ENCODE measurements at regions of chr6 and their contacts with region 1.

Region 1: GRCh38 chr6:132669690-132670291 is 10.8 kb upstream of the TAAR1 start:
- DNase-seq: no peak
- H3K4me3 ChIP-seq: no peak overlapping the region
- H3K27ac ChIP-seq: no peak overlapping the region
- H3K27me3 ChIP-seq: no peaks in the 10 kb centered on the region
- CTCF ChIP-seq: peak; percentile 58

Region 2: DNA sequence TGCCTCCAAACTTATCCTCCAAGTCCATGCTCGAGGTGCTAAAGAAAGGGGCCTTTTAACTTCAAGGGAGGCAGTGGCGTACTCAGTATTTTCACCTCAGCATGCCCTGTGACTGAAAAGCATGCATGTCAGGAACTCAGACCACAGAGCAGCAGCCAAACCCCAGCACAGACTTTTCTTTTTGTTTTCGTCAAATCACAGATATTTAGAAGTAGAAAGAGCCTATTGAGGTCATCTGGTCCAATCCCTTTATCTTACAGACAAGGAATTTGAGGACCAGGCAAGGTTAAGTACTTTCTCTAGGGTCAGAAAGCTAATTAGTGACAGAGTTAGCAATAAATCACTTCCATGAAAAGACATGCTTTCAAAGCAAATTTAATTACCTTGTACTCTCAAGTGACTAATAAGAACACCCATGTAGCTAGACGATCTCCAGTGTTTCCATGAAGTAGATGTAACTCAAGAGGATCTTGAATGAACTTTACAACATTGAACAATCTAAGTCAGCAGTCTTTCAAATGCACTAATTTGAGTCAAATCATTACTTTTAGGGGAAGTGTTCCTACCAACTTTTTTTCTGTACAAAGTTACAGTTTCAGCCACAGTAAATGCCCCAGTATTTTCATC is 304.4 kb before region 1 on chr6:
- CTCF ChIA-PET with region 1: no interaction called
- POLR2A ChIA-PET with region 1: no interaction called
- DNase-seq: no peak
- H3K4me3 ChIP-seq: no peak overlapping the region
- H3K27ac ChIP-seq: no peak overlapping the region
- H3K27me3 ChIP-seq: no peaks in the 10 kb centered on the region
- CTCF ChIP-seq: no peak

Region 3: DNA sequence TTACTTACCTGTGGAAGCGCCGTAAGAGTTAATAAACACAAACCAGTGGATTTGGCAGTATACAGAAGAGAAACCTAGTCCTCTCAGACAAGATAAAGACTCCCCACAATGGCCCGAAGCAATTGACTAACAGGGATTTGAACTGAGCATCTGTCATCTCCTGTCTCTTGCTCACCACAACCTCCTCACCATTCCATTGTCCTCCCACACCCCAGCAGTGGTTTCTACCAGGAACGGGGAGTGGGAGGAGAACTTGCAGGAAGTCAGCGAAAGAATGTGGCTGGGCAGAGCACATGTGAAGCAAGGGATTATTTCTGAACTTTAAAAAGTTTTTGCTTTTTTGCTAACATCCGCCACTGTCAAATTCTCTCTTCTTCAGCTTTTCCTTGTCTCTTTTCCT is 13.8 kb after region 1 on chr6:
- CTCF ChIA-PET with region 1: interaction called, 17 read pairs
- POLR2A ChIA-PET with region 1: no interaction called
- DNase-seq: no peak
- H3K4me3 ChIP-seq: no peak overlapping the region
- H3K27ac ChIP-seq: no peak overlapping the region
- H3K27me3 ChIP-seq: no peaks in the 10 kb centered on the region
- CTCF ChIP-seq: no peak

Region 4: GRCh38 chr6:132715204-132715603 is 45.4 kb after region 1 on chr6:
- CTCF ChIA-PET with region 1: interaction called, 38 read pairs
- POLR2A ChIA-PET with region 1: no interaction called
- DNase-seq: peak; percentile 52
- H3K4me3 ChIP-seq: no peak overlapping the region
- H3K27ac ChIP-seq: no peak overlapping the region
- H3K27me3 ChIP-seq: no peaks in the 10 kb centered on the region
- CTCF ChIP-seq: peak; percentile 61

Region 5: DNA sequence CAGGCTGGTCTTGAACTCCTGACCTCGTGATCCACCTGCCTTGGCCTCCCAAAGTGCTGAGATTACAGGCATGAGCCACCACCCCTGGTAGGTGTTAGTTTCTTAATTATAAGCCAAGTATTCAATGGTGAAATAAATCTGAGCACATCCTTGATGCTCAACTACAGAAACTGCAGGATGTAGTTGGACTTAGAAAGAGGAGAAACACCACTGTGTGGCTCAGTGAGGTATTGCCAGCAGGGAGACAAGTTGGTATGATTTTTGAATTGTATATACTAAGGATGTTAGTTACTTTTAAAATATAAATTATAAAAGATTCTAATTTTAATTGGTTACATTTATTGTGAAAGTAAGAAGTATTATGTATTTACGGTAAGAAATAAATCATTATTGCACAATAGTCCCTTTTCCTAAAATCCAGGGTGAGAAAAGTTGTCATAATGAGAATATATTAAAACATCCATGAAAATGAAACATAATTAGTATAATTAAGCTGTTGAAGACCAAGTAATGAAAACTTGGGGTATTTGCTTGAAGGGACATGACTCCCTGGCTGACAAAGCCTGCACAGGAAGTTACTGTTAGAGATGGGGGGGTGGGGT is 111.1 kb after region 1 on chr6:
- CTCF ChIA-PET with region 1: interaction called, 133 read pairs
- POLR2A ChIA-PET with region 1: no interaction called
- DNase-seq: no peak
- H3K4me3 ChIP-seq: no peak overlapping the region
- H3K27ac ChIP-seq: no peak overlapping the region
- H3K27me3 ChIP-seq: no peaks in the 10 kb centered on the region
- CTCF ChIP-seq: peak; percentile 73

Region 6: GRCh38 chr6:132798869-132799538 is 129.2 kb after region 1 on chr6:
- CTCF ChIA-PET with region 1: interaction called, 79 read pairs
- POLR2A ChIA-PET with region 1: no interaction called
- DNase-seq: no peak
- H3K4me3 ChIP-seq: peak overlapping the region; percentile 79
- H3K27ac ChIP-seq: no peak overlapping the region
- H3K27me3 ChIP-seq: peaks cover 2% of the 10 kb centered on the region
- CTCF ChIP-seq: peak; percentile 83

Region 7: DNA sequence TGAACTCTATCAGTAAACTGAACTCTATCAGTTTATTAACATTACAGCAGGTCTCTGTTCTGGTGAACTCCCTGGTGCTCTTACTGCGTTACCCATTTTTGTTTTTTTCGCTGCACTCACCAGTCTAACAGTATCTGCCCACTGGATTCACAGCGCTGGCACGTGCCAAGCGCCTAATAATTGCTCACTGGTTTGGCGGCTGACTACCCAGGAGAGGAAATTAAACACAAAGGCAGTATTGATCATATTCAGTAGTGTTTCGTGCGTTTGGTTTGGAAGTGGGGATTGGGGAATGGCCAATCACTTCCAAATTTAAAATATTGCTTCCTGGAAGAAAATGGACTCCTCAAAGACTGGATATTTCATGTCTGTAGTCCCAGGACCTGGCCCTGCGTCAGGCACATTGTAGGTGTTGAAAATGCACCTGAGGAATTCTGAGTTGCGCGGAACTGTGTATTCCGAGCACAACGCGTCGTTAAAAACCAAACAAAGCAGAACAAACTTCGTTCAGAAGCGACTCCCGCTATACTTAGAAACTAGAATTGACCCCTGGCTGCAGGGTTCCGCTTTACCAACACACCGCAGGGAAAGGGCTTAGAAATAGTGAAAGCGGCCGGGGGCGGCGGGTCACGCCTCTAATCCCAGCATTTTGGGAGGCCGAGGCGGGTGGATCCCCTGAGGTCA is 143.5 kb after region 1 on chr6:
- CTCF ChIA-PET with region 1: interaction called, 19 read pairs
- POLR2A ChIA-PET with region 1: no interaction called
- DNase-seq: no peak
- H3K4me3 ChIP-seq: peak overlapping the region; percentile 87
- H3K27ac ChIP-seq: peak overlapping the region; percentile 65
- H3K27me3 ChIP-seq: peaks cover 3% of the 10 kb centered on the region
- CTCF ChIP-seq: no peak

Measured in AG04450 (cell line).